Naive thymus-derived CD4-positive, alpha-beta T cell (primary cell): ENCODE measurements at regions of chr2 and their contacts with region 1.

Region 1: GRCh38 chr2:84817239-84817655 is 63.6 kb downstream of the TRABD2A start:
- DNase-seq: no peak
- ATAC-seq: no peak
- H3K4me3 ChIP-seq: no peak overlapping the region
- H3K4me3 Mint-ChIP-seq: peak overlapping the region in 7 of 10 donors; percentile 5 to 58 (median 43)
- H3K27ac ChIP-seq: peak overlapping the region; percentile 12
- H3K27ac Mint-ChIP-seq: peak overlapping the region in 8 of 9 donors; percentile 20 to 89 (median 81)
- H3K4me1 ChIP-seq: peaks cover 7 to 55% of the 10 kb centered on the region in 2 donors
- H3K4me1 Mint-ChIP-seq: peaks cover 22 to 92% (median 61%) of the 10 kb centered on the region in 7 donors
- H3K27me3 ChIP-seq: no peaks in the 10 kb centered on the region
- H3K27me3 Mint-ChIP-seq: no peaks in the 10 kb centered on the region

Region 2: DNA sequence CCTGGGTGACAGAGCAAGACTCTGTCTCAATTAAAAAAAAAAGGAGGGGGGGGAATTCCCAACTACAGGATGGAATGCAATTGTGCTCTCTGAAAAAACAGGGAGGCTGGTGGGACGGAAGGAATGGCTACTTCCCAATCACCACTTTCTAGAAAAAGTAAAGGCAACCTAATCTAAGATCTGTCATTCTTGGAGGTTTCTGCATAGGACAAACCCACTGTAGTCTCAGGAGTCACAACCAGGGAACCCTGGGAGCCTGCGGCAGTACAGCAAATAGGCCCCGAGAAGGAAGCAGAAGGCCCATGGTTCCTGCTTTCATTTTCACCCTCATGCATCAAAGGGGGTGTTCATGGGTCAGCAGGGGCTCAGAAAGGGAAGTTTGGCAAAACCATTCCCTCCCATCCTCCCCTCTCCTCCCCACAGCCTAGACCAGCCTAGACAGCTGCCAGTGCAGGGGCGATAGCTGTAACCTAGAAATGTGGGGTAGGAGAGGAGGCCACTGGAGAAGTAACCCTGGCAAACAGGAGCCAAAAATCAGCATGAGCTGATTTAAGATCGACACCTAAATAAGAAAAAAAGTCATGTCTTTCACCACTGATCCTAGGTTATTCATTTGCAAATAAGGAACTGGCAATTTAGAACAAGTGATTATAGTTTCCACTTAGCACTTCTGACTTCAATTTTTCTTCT is 15.7 kb after region 1 on chr2:
- CTCF ChIA-PET with region 1: no interaction called
- POLR2A ChIA-PET with region 1: interaction called, 13 read pairs
- intact Hi-C with region 1: loop called in 1 of 2 experiments (anchors 2 kb)
- DNase-seq: no peak
- ATAC-seq: peak; percentile 64
- H3K4me3 ChIP-seq: peak overlapping the region; percentile 50
- H3K4me3 Mint-ChIP-seq: peak overlapping the region in 7 of 10 donors; percentile 74 to 89 (median 79)
- H3K27ac ChIP-seq: peak overlapping the region; percentile 79
- H3K27ac Mint-ChIP-seq: peak overlapping the region in 1 of 9 donors; percentile 92
- H3K4me1 ChIP-seq: peaks cover 36 to 93% of the 10 kb centered on the region in 2 donors
- H3K4me1 Mint-ChIP-seq: peaks cover 18 to 46% (median 26%) of the 10 kb centered on the region in 7 donors
- H3K27me3 ChIP-seq: no peaks in the 10 kb centered on the region
- H3K27me3 Mint-ChIP-seq: no peaks in the 10 kb centered on the region

Region 3: DNA sequence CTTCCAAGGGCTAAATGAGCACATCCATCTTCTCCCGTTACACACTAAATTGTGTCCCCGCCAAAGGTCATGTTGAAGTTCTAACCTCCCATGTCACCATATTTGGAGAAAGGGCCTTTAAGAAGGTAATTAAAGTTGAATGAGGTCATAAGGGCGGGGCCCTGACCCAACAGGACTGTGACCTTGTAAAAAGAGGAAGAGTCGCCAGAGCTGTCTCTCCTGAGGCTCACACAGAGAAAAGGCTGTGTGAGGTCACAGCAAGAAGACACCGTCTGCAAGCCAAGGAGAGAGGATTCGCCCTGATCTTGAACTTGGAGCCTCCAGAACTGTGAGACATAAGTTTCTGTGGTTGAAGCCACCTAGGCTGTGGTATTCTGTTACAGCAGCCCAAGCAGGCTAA is 39.5 kb after region 1 on chr2:
- CTCF ChIA-PET with region 1: no interaction called
- POLR2A ChIA-PET with region 1: interaction called, 4 read pairs
- intact Hi-C with region 1: loop called in 1 of 2 experiments (anchors 5 kb)
- DNase-seq: peak in 2 of 9 donors; percentile 31 to 49
- ATAC-seq: peak; percentile 73
- H3K4me3 ChIP-seq: no peak overlapping the region
- H3K4me3 Mint-ChIP-seq: peak overlapping the region; percentile 54 to 89 (median 85)
- H3K27ac ChIP-seq: peak overlapping the region; percentile 72
- H3K27ac Mint-ChIP-seq: peak overlapping the region; percentile 85 to 99 (median 96)
- H3K4me1 ChIP-seq: peaks cover 53 to 95% of the 10 kb centered on the region in 2 donors
- H3K4me1 Mint-ChIP-seq: peaks cover 72 to 98% (median 96%) of the 10 kb centered on the region in 7 donors
- H3K27me3 ChIP-seq: no peaks in the 10 kb centered on the region
- H3K27me3 Mint-ChIP-seq: no peaks in the 10 kb centered on the region